Ascending aorta (tissue), 2 donors: ENCODE measurements at regions of chr7 and their contacts with region 1.

Region 1: DNA sequence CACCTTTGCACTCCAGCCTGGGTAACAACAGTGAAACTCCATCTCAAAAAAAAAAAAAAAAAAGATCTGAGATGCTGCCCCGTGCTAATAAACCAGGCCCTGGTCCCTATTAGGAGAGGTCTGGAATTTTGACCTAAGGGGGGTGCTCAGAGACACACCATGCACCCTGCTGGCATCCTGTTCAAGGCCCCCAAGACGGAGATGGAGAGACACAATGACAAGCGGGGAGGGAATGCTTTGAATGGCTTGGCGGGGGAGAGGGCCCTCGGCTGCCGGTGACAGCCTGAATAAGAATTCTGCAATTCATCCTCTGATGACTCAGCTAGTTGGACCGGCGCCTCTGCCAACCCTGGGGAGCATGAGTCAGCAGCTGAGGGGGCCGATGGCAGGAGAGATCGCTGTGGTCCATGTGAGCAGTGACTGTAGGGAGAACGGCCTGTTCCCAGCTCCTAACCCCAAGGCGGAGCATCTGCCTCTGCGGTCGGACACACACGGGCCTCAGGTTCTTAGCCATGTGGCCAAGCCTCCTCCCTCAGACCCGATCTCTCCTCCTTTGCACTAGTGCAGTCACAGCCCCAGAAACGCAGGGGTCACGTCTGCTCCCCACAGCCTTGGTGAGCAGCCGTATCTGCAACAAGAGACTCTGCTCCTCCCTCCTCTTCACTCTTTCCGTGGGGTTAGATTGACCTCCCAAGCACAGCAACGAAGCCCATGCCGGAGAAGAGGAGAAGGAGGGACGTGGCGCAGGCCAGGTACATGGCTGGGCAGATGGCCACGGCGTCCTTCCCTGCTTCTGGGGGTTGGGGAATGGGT is 14.9 kb downstream of the TRIM56 start:
- DNase-seq: peak; percentile 96 to 99
- H3K4me3 ChIP-seq: no peak overlapping the region
- H3K27ac ChIP-seq: peak overlapping the region; percentile 90 to 93
- H3K4me1 ChIP-seq: peaks cover 8 to 22% of the 10 kb centered on the region in 2 donors
- H3K27me3 ChIP-seq: no peaks in the 10 kb centered on the region
- CTCF ChIP-seq: no peak

Region 2: DNA sequence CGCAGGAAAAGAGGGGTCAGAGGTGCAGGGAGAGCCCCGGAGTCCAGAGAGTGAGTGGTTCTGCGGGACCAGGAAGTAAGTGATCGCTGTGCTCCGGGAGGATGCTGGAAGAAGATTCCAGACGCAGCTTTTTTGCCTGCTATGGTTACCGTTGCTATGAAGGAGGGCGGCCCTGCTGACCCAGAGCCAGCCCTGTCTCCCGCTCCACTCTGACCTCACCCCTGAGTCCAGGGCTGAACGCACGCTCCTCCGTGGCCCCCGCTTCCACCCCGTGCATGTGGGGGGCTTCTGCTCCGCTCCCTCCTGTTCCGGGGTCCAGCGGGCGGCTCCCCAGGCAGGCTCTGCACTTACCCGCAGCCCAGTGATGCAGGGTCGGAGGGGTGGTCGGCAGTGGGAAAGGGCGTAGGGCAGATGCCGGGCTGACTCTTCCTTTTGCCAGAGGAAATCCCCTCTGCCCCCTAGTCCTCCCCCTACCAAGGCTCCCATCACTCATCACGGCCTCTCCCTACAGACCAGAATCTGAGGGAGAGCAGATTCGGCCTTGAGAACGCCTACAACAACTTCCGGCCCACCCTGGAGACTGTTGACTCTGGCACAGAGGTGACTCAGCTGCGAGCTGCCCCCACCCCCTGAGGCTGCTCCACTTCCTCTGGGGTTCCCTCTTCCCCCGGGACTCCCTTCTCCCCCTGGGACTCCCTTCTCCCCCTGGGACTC is 83.0 kb before region 1 on chr7:
- intact Hi-C with region 1: no loop called
- DNase-seq: peak; percentile 27 to 87
- H3K4me3 ChIP-seq: peak overlapping the region; percentile 63 to 70
- H3K27ac ChIP-seq: peak overlapping the region; percentile 14 to 19
- H3K4me1 ChIP-seq: peaks cover 0 to 7% of the 10 kb centered on the region in 2 donors
- H3K27me3 ChIP-seq: no peaks in the 10 kb centered on the region
- CTCF ChIP-seq: no peak

Region 3: GRCh38 chr7:101116898-101117297 is 16.7 kb after region 1 on chr7:
- intact Hi-C with region 1: loop called (anchors 1 kb)
- DNase-seq: no peak
- H3K4me3 ChIP-seq: no peak overlapping the region
- H3K27ac ChIP-seq: peak overlapping the region; percentile 96 to 98
- H3K4me1 ChIP-seq: peaks cover 6 to 29% of the 10 kb centered on the region in 2 donors
- H3K27me3 ChIP-seq: no peaks in the 10 kb centered on the region
- CTCF ChIP-seq: no peak

Region 4: DNA sequence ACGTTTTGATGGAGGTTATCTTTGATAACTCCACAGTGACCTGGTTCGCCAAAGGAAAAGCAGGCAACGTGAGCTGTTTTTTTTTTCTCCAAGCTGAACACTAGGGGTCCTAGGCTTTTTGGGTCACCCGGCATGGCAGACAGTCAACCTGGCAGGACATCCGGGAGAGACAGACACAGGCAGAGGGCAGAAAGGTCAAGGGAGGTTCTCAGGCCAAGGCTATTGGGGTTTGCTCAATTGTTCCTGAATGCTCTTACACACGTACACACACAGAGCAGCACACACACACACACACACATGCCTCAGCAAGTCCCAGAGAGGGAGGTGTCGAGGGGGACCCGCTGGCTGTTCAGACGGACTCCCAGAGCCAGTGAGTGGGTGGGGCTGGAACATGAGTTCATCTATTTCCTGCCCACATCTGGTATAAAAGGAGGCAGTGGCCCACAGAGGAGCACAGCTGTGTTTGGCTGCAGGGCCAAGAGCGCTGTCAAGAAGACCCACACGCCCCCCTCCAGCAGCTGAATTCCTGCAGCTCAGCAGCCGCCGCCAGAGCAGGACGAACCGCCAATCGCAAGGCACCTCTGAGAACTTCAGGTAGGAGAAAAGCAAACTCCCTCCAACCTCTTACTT is 26.6 kb after region 1 on chr7 and contains the start of gene SERPINE1:
- intact Hi-C with region 1: loop called (anchors 1 kb)
- DNase-seq: peak; percentile 93 to 99
- H3K4me3 ChIP-seq: peak within 1 kb of the TSS; percentile 56 to 71
- H3K27ac ChIP-seq: peak within 1 kb of the TSS; percentile 96 to 98
- H3K4me1 ChIP-seq: peaks cover 12 to 65% of the 10 kb centered on the region in 2 donors
- H3K27me3 ChIP-seq: no peaks in the 10 kb centered on the region
- CTCF ChIP-seq: peak in 1 of 3 experiments; percentile 24
- total RNA-seq, gene SERPINE1: 1,267 TPM